Caco-2 (cell line): ENCODE measurements at regions of chr2 and their contacts with region 1.

Region 1: DNA sequence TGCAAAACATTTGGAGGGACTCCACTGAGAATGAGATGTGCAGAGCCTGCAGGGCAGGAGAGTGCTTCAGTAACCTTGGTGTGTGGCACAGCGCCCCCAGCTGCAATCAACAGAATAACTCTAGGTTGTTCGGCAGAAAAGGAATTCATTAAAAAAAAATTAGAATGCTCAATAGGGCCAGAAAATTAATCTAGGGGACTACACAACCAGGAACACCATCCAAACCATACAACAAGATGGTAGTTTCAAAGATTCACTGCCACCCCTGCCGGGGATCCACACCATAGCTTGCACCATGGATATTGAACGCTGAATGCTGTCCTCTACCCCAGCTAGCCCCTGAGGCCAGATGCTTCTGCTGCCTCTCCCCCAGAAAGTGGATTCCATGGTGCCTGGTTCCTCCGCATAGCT is 50.1 kb downstream of the THUMPD2 start:
- DNase-seq: peak in 1 of 2 experiments; percentile 45
- H3K4me3 ChIP-seq: no peak overlapping the region
- H3K4me3 Mint-ChIP-seq: no peak overlapping the region
- H3K27ac Mint-ChIP-seq: no peak overlapping the region
- H3K4me1 ChIP-seq: peaks cover 26% of the 10 kb centered on the region
- H3K4me1 Mint-ChIP-seq: peaks cover 20% of the 10 kb centered on the region
- H3K27me3 ChIP-seq: no peaks in the 10 kb centered on the region
- H3K27me3 Mint-ChIP-seq: no peaks in the 10 kb centered on the region
- CTCF ChIP-seq: peak; percentile 75 to 86

Region 2: DNA sequence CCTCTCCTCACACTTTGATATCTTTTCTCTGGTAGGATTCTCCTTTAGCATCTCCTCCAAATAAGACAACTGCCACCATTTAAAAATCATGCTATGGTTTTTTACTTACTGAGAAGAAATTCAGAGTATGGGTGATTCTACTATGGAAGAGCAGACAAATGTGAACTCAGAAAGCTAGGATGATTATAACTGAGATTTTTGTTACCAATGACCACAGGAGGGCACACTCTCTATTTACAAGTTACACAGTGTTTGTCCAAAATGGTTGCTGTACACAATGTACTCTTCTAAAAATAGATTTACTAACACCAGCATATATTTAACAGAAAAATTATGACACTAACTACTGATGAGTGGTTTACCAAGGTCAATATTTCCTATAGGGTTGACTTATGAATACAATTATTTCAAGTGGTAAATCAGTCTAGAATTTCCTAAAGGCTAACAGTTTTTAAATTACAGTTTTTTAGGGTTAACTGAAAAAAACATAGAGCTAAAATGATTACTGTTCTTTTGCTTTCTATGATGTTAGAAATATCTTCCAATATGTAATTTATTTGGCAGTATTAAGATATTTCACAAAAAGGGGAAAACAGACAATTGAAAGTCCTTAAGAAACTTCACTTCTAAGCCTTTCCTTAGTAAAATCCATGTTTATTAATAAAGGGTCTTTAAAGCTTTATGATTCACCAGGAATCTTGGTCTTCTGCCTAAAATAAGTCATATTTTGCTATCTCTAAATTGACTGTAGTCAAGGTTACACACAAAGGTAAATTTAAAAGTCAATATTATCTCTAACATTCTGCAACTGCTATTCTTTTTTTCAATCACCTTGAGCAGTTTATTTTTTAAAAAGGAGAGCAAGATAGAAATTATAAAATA is 349.1 kb before region 1 on chr2:
- CTCF ChIA-PET with region 1: interaction called, 5 read pairs
- POLR2A ChIA-PET with region 1: no interaction called
- intact Hi-C with region 1: loop called (anchors 1 kb)
- DNase-seq: peak in 1 of 2 experiments; percentile 43
- H3K4me3 ChIP-seq: no peak overlapping the region
- H3K4me3 Mint-ChIP-seq: no peak overlapping the region
- H3K27ac Mint-ChIP-seq: no peak overlapping the region
- H3K4me1 ChIP-seq: 0 out of 2 replicates have a peak, but pooled peaks cover 4% of the 10 kb centered on the region
- H3K4me1 Mint-ChIP-seq: peaks cover 7% of the 10 kb centered on the region
- H3K27me3 ChIP-seq: no peaks in the 10 kb centered on the region
- H3K27me3 Mint-ChIP-seq: no peaks in the 10 kb centered on the region
- CTCF ChIP-seq: peak; percentile 57 to 74

Region 3: GRCh38 chr2:39593439-39594393 is 135.2 kb before region 1 on chr2:
- CTCF ChIA-PET with region 1: interaction called, 13 read pairs
- POLR2A ChIA-PET with region 1: no interaction called
- intact Hi-C with region 1: loop called (anchors 1 kb)
- DNase-seq: peak; percentile 53 to 65
- H3K4me3 ChIP-seq: no peak overlapping the region
- H3K4me3 Mint-ChIP-seq: no peak overlapping the region
- H3K27ac Mint-ChIP-seq: no peak overlapping the region
- H3K4me1 ChIP-seq: no peaks in the 10 kb centered on the region
- H3K4me1 Mint-ChIP-seq: no peaks in the 10 kb centered on the region
- H3K27me3 ChIP-seq: no peaks in the 10 kb centered on the region
- H3K27me3 Mint-ChIP-seq: no peaks in the 10 kb centered on the region
- CTCF ChIP-seq: peak; percentile 54 to 73

Region 4: GRCh38 chr2:39642051-39642742 is 86.7 kb before region 1 on chr2:
- CTCF ChIA-PET with region 1: no interaction called
- POLR2A ChIA-PET with region 1: no interaction called
- intact Hi-C with region 1: loop called (anchors 5 kb)
- DNase-seq: no peak
- H3K4me3 ChIP-seq: no peak overlapping the region
- H3K4me3 Mint-ChIP-seq: no peak overlapping the region
- H3K27ac Mint-ChIP-seq: no peak overlapping the region
- H3K4me1 ChIP-seq: no peaks in the 10 kb centered on the region
- H3K4me1 Mint-ChIP-seq: no peaks in the 10 kb centered on the region
- H3K27me3 ChIP-seq: no peaks in the 10 kb centered on the region
- H3K27me3 Mint-ChIP-seq: no peaks in the 10 kb centered on the region
- CTCF ChIP-seq: no peak